Caco-2 (cell line): ENCODE measurements at regions of chr17 and their contacts with region 1.

Region 1: DNA sequence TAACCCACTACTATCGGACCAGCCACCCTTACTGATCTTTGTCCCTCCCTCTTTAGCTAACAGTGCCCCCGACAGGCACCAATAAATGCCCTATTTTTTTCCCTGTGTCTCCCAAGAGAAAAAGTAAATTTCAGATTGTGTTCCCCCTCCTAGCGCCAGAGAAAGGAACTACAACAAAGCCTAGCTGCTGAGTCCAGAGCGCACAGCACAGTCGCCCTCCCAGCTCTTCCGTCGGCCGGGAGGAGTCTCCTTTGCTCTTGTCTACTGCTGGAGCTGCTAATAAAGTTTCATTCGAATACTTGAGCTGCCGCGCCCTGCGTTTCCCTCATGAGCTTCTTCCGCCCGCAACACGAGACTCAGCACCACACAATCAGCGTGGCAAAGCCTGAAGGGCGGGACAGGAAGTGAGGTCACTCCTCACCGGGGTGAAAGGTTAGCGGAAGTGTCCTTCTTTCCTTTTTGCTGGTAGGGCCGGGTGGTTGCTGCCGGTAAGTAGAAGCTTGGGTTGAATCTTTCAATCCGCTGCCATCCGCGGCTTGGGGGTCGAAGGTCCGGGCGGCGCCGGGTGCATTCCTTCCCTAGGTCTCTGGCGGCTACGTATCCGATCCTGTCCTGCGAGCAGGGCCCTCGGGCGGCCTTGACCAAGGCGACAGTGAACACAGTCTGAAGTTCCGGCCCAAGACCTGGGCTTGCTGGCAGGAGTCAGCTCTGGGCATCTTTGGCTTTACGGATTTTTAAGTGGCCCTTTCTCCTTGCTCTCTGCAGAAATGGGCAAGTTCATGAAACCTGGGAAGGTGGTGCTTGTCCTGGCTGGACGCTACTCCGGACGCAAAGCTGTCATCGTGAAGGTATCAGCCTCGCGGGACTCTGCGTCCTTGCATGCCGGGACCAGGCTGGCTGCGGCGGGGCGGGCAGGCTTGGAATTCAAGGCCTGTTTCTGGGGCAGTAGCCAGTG is at the start of gene RPL27:
- DNase-seq: peak; percentile 98 to 99
- H3K4me3 ChIP-seq: peak within 1 kb of the TSS; percentile 59
- H3K4me3 Mint-ChIP-seq: peak within 1 kb of the TSS; percentile 90
- H3K27ac Mint-ChIP-seq: peak within 1 kb of the TSS; percentile 99
- H3K4me1 ChIP-seq: peaks cover 16% of the 10 kb centered on the region
- H3K4me1 Mint-ChIP-seq: peaks cover 12% of the 10 kb centered on the region
- H3K27me3 ChIP-seq: no peaks in the 10 kb centered on the region
- H3K27me3 Mint-ChIP-seq: no peaks in the 10 kb centered on the region
- CTCF ChIP-seq: peak; percentile 82 to 91
- total RNA-seq, gene RPL27: 1,565 and 1,613 TPM in 2 replicates

Region 2: DNA sequence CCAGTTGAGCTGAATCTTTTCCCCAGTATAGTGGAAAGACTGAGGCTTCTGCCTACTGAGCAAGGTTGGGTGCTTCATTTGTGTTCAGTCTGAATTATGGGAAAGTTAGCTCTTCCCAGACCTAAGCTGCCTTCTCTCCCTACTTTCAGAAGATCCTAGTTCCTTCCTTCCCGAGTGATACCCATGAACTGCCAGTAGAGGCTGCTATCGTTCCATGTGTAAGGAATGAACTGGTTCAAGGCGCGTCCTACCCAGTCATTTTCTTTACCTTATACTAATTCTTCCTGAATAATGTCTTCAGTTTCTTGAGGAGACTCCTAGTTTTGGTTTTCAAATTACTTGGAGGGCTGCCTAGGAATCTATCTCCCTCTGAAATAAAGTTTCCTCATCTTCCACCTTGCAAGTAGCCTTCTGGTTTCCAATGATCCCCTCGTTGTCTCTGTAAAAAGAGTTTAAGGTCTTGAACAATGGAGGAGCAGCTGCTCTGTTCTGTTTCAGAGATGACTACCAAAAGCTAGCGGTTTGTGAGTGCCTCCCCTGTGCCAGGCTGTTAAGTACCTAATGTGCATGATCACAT is 154.8 kb before region 1 on chr17:
- CTCF ChIA-PET with region 1: interaction called, 10 read pairs
- POLR2A ChIA-PET with region 1: interaction called, 3 read pairs
- intact Hi-C with region 1: loop called (anchors 1 kb)
- DNase-seq: peak in 1 of 2 experiments; percentile 70
- H3K4me3 ChIP-seq: no peak overlapping the region
- H3K4me3 Mint-ChIP-seq: no peak overlapping the region
- H3K27ac Mint-ChIP-seq: no peak overlapping the region
- H3K4me1 ChIP-seq: no peaks in the 10 kb centered on the region
- H3K4me1 Mint-ChIP-seq: no peaks in the 10 kb centered on the region
- H3K27me3 ChIP-seq: no peaks in the 10 kb centered on the region
- H3K27me3 Mint-ChIP-seq: no peaks in the 10 kb centered on the region
- CTCF ChIP-seq: peak; percentile 96 to 99

Region 3: DNA sequence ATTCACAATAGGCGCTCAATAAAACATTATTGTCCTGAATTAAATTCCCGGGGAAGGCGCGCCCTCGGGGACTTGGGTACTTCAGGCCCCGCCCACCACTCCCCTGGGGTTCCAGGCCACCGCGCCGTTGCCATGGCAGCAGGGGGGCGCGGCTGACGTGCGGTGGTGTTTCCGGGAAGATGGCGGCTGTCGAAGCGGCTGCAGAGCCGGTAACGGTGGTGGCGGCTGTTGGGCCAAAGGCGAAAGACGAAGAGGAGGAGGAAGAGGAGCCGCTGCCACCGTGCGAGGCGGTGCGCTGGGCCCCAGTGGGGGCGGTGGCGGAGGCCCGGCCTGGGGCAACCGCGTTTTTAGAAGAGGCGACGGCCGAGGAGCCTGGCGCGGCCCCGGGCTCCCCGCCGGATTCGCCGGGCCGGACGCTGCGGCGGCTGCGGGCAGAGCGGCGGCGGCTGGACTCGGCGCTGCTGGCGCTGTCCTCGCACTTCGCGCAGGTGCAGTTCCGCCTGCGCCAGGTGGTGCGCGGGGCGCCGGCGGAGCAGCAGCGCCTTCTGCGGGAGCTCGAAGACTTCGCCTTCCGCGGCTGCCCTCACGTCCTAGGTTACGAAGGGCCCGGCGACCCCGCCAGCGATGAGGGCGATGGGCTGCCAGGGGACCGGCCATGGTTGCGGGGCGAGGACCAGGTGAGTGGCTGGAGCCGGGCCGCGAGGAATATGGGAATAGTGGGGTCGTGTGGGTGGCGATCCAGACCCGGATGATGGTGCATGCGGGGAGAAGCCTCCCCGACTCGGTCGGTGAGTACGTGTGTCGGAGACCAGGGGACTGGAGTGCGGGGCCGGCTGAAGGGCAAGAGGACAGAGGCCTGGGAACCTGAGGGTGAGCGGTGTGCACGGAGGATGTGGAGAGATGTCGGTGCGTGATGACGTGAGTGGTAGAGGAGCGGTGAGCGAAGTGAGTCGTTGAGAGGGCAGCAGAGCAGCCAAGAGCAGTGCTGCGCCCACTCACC is 17.6 kb before region 1 on chr17 and contains the start of gene RUNDC1:
- CTCF ChIA-PET with region 1: interaction called, 4 read pairs
- POLR2A ChIA-PET with region 1: interaction called, 21 read pairs
- intact Hi-C with region 1: loop called (anchors 2 kb)
- DNase-seq: peak; percentile 91 to 94
- H3K4me3 ChIP-seq: peak within 1 kb of the TSS; percentile 100
- H3K4me3 Mint-ChIP-seq: peak within 1 kb of the TSS; percentile 100
- H3K27ac Mint-ChIP-seq: peak within 1 kb of the TSS; percentile 96
- H3K4me1 ChIP-seq: peaks cover 7% of the 10 kb centered on the region; the same call in 1 of the 2 replicates
- H3K4me1 Mint-ChIP-seq: peaks cover 12% of the 10 kb centered on the region
- H3K27me3 ChIP-seq: no peaks in the 10 kb centered on the region
- H3K27me3 Mint-ChIP-seq: no peaks in the 10 kb centered on the region
- CTCF ChIP-seq: peak in 1 of 2 experiments; percentile 55
- total RNA-seq, gene RUNDC1: 17.6 and 18.2 TPM in 2 replicates

Region 4: DNA sequence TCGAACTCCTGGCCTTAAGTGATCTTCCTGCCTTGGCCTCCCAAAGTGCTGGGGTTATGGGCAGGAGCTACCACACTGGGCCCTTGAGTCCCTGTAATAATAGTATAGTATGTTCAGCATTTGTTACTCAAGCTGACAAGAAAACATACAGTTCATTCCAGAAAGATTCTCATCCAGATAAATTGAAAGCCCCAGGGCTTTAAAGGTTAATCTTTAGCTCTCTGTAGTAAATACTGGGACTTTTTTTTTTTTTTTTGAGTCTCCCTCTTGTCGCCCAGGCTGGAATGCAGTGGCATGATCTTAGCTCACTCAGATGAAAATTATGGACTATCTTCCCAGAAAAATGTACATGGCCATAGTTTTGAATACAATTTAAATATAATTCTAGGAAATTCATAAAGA is 115.9 kb after region 1 on chr17:
- CTCF ChIA-PET with region 1: no interaction called
- POLR2A ChIA-PET with region 1: interaction called, 15 read pairs
- intact Hi-C with region 1: no loop called
- DNase-seq: peak; percentile 69 to 77
- H3K4me3 ChIP-seq: no peak overlapping the region
- H3K4me3 Mint-ChIP-seq: no peak overlapping the region
- H3K27ac Mint-ChIP-seq: peak overlapping the region; percentile 69
- H3K4me1 ChIP-seq: peaks cover 26% of the 10 kb centered on the region
- H3K4me1 Mint-ChIP-seq: peaks cover 25% of the 10 kb centered on the region
- H3K27me3 ChIP-seq: no peaks in the 10 kb centered on the region
- H3K27me3 Mint-ChIP-seq: no peaks in the 10 kb centered on the region
- CTCF ChIP-seq: no peak

Region 5: GRCh38 chr17:43134774-43135453 is 136.7 kb after region 1 on chr17:
- CTCF ChIA-PET with region 1: no interaction called
- POLR2A ChIA-PET with region 1: no interaction called
- intact Hi-C with region 1: no loop called
- DNase-seq: no peak
- H3K4me3 ChIP-seq: no peak overlapping the region
- H3K4me3 Mint-ChIP-seq: no peak overlapping the region
- H3K27ac Mint-ChIP-seq: no peak overlapping the region
- H3K4me1 ChIP-seq: no peaks in the 10 kb centered on the region
- H3K4me1 Mint-ChIP-seq: peaks cover 6% of the 10 kb centered on the region
- H3K27me3 ChIP-seq: no peaks in the 10 kb centered on the region
- H3K27me3 Mint-ChIP-seq: no peaks in the 10 kb centered on the region
- CTCF ChIP-seq: no peak

Region 6: GRCh38 chr17:43211480-43212402 is 213.5 kb after region 1 on chr17 and contains the start of gene TMEM106A:
- CTCF ChIA-PET with region 1: interaction called, 3 read pairs
- POLR2A ChIA-PET with region 1: interaction called, 10 read pairs
- intact Hi-C with region 1: no loop called
- DNase-seq: peak; percentile 66 to 68
- H3K4me3 ChIP-seq: peak within 1 kb of the TSS; percentile 55
- H3K4me3 Mint-ChIP-seq: peak within 1 kb of the TSS; percentile 92
- H3K27ac Mint-ChIP-seq: peak within 1 kb of the TSS; percentile 77
- H3K4me1 ChIP-seq: peaks cover 17% of the 10 kb centered on the region
- H3K4me1 Mint-ChIP-seq: peaks cover 10% of the 10 kb centered on the region
- H3K27me3 ChIP-seq: no peaks in the 10 kb centered on the region
- H3K27me3 Mint-ChIP-seq: no peaks in the 10 kb centered on the region
- CTCF ChIP-seq: peak in 1 of 2 experiments; percentile 29
- total RNA-seq, gene TMEM106A: 6.9 and 8.0 TPM in 2 replicates

Region 7: GRCh38 chr17:43360739-43361505 is 362.7 kb after region 1 on chr17:
- CTCF ChIA-PET with region 1: no interaction called
- POLR2A ChIA-PET with region 1: interaction called, 17 read pairs
- intact Hi-C with region 1: no loop called
- DNase-seq: peak; percentile 95 to 99
- H3K4me3 ChIP-seq: peak overlapping the region; percentile 36
- H3K4me3 Mint-ChIP-seq: peak overlapping the region; percentile 70
- H3K27ac Mint-ChIP-seq: peak overlapping the region; percentile 99
- H3K4me1 ChIP-seq: peaks cover 14% of the 10 kb centered on the region
- H3K4me1 Mint-ChIP-seq: peaks cover 31% of the 10 kb centered on the region
- H3K27me3 ChIP-seq: no peaks in the 10 kb centered on the region
- H3K27me3 Mint-ChIP-seq: peaks cover 2% of the 10 kb centered on the region
- CTCF ChIP-seq: no peak